HepG2 (cell line): ENCODE measurements at regions of chr2 and their contacts with region 1.

Region 1: DNA sequence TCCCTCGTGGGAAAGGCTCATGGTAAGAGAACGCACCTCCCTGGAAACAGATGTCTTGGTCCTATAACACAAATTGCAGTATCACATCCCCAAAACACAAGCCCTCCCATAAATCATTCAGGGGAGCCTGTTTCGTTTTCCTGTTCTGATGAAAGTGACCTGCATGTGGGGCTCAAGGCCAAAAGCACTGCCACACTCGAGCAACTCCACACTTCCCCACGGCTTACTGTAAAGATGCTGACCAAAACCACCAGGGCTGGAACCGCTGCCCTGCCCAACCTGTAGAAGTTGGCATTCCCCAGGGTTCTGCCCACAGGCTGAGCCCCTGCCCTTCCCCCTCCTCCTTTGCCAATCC is 139.7 kb downstream of the BCL11A start:
- DNase-seq: no peak
- ATAC-seq: no peak
- H3K4me3 ChIP-seq: no peak overlapping the region
- H3K27ac ChIP-seq: no peak overlapping the region
- H3K4me1 ChIP-seq: no peaks in the 10 kb centered on the region
- H3K27me3 ChIP-seq: peaks cover 0 to 3% of the 10 kb centered on the region in 2 experiments; a peak in 3 of 5 replicates
- CTCF ChIP-seq: no peak
- EP300 ChIP-seq: no peak
- POLR2A ChIP-seq: no peak
- RAD21 ChIP-seq: no peak

Region 2: GRCh38 chr2:60456115-60456770 is 42.5 kb after region 1 on chr2:
- CTCF ChIA-PET with region 1: no interaction called
- POLR2A ChIA-PET with region 1: no interaction called
- in situ Hi-C with region 1: no loop called
- intact Hi-C with region 1: loop called (anchors 1 kb)
- DNase-seq: peak; percentile 30
- ATAC-seq: no peak
- H3K4me3 ChIP-seq: no peak overlapping the region
- H3K27ac ChIP-seq: no peak overlapping the region
- H3K4me1 ChIP-seq: no peaks in the 10 kb centered on the region
- H3K27me3 ChIP-seq: peaks cover 2 to 15% of the 10 kb centered on the region in 2 experiments; a peak in 2 of 5 replicates
- CTCF ChIP-seq: no peak
- EP300 ChIP-seq: no peak
- POLR2A ChIP-seq: no peak
- RAD21 ChIP-seq: no peak